ENCODE measurements at regions of chr7 and their contacts with region 1.

Region 1: GRCh38 chr7:149028346-149029109 is at the start of gene PDIA4:
- DNase-seq: peak; percentile 99 to 100 (median 100)

Region 2: GRCh38 chr7:148773334-148773733 is 255.2 kb before region 1 on chr7:
- intact Hi-C with region 1: no loop called
- DNase-seq: no peak

Region 3: GRCh38 chr7:148987010-148987750 is 41.3 kb before region 1 on chr7:
- intact Hi-C with region 1: loop called (anchors 5 kb)
- DNase-seq: peak; percentile 57 to 96 (median 78)

Region 4: GRCh38 chr7:149067876-149068275 is 39.3 kb after region 1 on chr7:
- intact Hi-C with region 1: loop called (anchors 5 kb)
- DNase-seq: no peak